B cell (primary cell): ENCODE measurements at regions of chr3 and their contacts with region 1.

Region 1: DNA sequence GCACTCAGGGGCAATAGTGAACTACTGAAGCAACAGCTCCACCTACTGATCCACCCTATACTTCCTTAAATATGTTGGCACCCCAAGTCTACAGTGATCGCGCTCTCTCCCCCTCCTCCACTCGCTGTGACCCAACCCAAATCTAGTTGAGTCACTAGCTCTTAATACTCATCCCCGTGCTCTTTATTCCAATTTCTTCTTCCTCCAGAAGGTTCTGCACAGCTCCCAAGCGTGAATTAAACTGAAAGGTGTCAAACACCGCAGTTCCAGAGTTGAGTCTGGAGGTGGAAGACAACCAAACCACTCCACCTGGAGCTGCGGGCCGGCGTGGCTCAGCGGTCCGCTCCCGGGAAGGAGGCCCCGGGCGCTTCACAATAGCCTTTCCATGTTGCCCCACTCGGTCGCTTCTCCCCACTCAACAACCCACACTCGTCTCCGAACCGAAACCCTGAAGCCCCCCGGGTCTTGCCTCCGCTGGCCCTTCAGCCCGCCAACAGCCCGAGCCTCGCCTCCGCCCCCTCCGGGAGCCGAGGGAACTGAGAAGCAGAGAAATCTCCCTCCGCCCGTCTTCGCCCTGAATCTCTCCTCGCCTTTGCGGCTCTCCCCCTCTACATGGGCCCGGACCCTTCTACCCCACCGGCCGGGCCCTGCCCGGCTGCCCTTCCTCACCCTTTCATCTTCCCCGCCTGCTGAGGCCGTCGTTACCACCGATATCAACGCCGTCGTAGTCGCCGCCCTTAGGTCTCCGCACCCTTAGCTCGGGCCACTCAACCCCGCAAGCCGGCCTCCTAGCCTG is 578 bp downstream of the NAA50 start:
- DNase-seq: peak; percentile 91
- ATAC-seq: peak; percentile 58
- H3K4me3 ChIP-seq: peak overlapping the region; percentile 75 to 94 (median 85)
- H3K4me3 Mint-ChIP-seq: peak overlapping the region; percentile 97
- H3K27ac ChIP-seq: peak overlapping the region; percentile 96 to 99
- H3K27ac Mint-ChIP-seq: peak overlapping the region; percentile 100
- H3K4me1 ChIP-seq: peaks cover 32 to 46% of the 10 kb centered on the region in 2 donors
- H3K4me1 Mint-ChIP-seq: peaks cover 67% of the 10 kb centered on the region
- H3K27me3 ChIP-seq: no peaks in the 10 kb centered on the region
- H3K27me3 Mint-ChIP-seq: no peaks in the 10 kb centered on the region
- CTCF ChIP-seq: peak; percentile 76

Region 2: GRCh38 chr3:112990672-112991602 is 754.5 kb before region 1 on chr3 and contains the start of gene GTPBP8:
- CTCF ChIA-PET with region 1: no interaction called
- POLR2A ChIA-PET with region 1: no interaction called
- intact Hi-C with region 1: loop called (anchors 2 kb)
- DNase-seq: peak; percentile 92
- ATAC-seq: peak; percentile 84
- H3K4me3 ChIP-seq: peak within 1 kb of the TSS; percentile 63 to 89 (median 76)
- H3K4me3 Mint-ChIP-seq: peak within 1 kb of the TSS; percentile 95
- H3K27ac ChIP-seq: peak within 1 kb of the TSS; percentile 82 to 98
- H3K27ac Mint-ChIP-seq: peak within 1 kb of the TSS; percentile 98
- H3K4me1 ChIP-seq: peaks cover 11 to 12% of the 10 kb centered on the region in 2 donors
- H3K4me1 Mint-ChIP-seq: peaks cover 30% of the 10 kb centered on the region
- H3K27me3 ChIP-seq: no peaks in the 10 kb centered on the region
- H3K27me3 Mint-ChIP-seq: no peaks in the 10 kb centered on the region
- CTCF ChIP-seq: no peak
- total RNA-seq, gene GTPBP8: 23.4 and 23.5 TPM in 2 replicates

Region 3: GRCh38 chr3:113531826-113532697 is 213.4 kb before region 1 on chr3 and contains the start of gene SIDT1:
- CTCF ChIA-PET with region 1: interaction called, 4 read pairs
- POLR2A ChIA-PET with region 1: no interaction called
- intact Hi-C with region 1: loop called (anchors 2 kb)
- DNase-seq: peak; percentile 89
- ATAC-seq: peak; percentile 81
- H3K4me3 ChIP-seq: peak within 1 kb of the TSS; percentile 86 to 96 (median 95)
- H3K4me3 Mint-ChIP-seq: peak within 1 kb of the TSS; percentile 93
- H3K27ac ChIP-seq: peak within 1 kb of the TSS; percentile 86 to 87
- H3K27ac Mint-ChIP-seq: peak within 1 kb of the TSS; percentile 96
- H3K4me1 ChIP-seq: peaks cover 35 to 36% of the 10 kb centered on the region in 2 donors
- H3K4me1 Mint-ChIP-seq: peaks cover 46% of the 10 kb centered on the region
- H3K27me3 ChIP-seq: no peaks in the 10 kb centered on the region
- H3K27me3 Mint-ChIP-seq: peaks cover 6% of the 10 kb centered on the region
- CTCF ChIP-seq: no peak
- total RNA-seq, gene SIDT1: 75.4 and 84.4 TPM in 2 replicates

Region 4: GRCh38 chr3:113660896-113661295 is 84.6 kb before region 1 on chr3:
- CTCF ChIA-PET with region 1: interaction called, 9 read pairs
- POLR2A ChIA-PET with region 1: interaction called, 3 read pairs
- intact Hi-C with region 1: loop called (anchors 1 kb)
- DNase-seq: peak; percentile 68
- ATAC-seq: peak; percentile 25
- H3K4me3 ChIP-seq: peak overlapping the region in 1 of 5 experiments; percentile 49
- H3K4me3 Mint-ChIP-seq: peak overlapping the region; percentile 70
- H3K27ac ChIP-seq: peak overlapping the region; percentile 81 to 93
- H3K27ac Mint-ChIP-seq: peak overlapping the region; percentile 94
- H3K4me1 ChIP-seq: peaks cover 76 to 81% of the 10 kb centered on the region in 2 donors
- H3K4me1 Mint-ChIP-seq: peaks cover 82% of the 10 kb centered on the region
- H3K27me3 ChIP-seq: no peaks in the 10 kb centered on the region
- H3K27me3 Mint-ChIP-seq: no peaks in the 10 kb centered on the region
- CTCF ChIP-seq: no peak

Region 5: GRCh38 chr3:113685956-113686754 is 59.3 kb before region 1 on chr3:
- CTCF ChIA-PET with region 1: no interaction called
- POLR2A ChIA-PET with region 1: no interaction called
- intact Hi-C with region 1: no loop called
- DNase-seq: no peak
- ATAC-seq: no peak
- H3K4me3 ChIP-seq: no peak overlapping the region
- H3K4me3 Mint-ChIP-seq: no peak overlapping the region
- H3K27ac ChIP-seq: no peak overlapping the region
- H3K27ac Mint-ChIP-seq: no peak overlapping the region
- H3K4me1 ChIP-seq: peaks cover 3 to 4% of the 10 kb centered on the region in 2 donors
- H3K4me1 Mint-ChIP-seq: peaks cover 33% of the 10 kb centered on the region
- H3K27me3 ChIP-seq: no peaks in the 10 kb centered on the region
- H3K27me3 Mint-ChIP-seq: no peaks in the 10 kb centered on the region
- CTCF ChIP-seq: no peak

Region 6: GRCh38 chr3:113832477-113833164 is 87.2 kb after region 1 on chr3:
- CTCF ChIA-PET with region 1: interaction called, 42 read pairs
- POLR2A ChIA-PET with region 1: interaction called, 24 read pairs
- intact Hi-C with region 1: loop called (anchors 2 kb)
- DNase-seq: peak; percentile 23
- ATAC-seq: no peak
- H3K4me3 ChIP-seq: peak overlapping the region in 1 of 5 experiments; percentile 3
- H3K4me3 Mint-ChIP-seq: peak overlapping the region; percentile 20
- H3K27ac ChIP-seq: peak overlapping the region; percentile 43 to 59
- H3K27ac Mint-ChIP-seq: peak overlapping the region; percentile 56
- H3K4me1 ChIP-seq: peaks cover 49 to 50% of the 10 kb centered on the region in 2 donors
- H3K4me1 Mint-ChIP-seq: peaks cover 61% of the 10 kb centered on the region
- H3K27me3 ChIP-seq: no peaks in the 10 kb centered on the region
- H3K27me3 Mint-ChIP-seq: no peaks in the 10 kb centered on the region
- CTCF ChIP-seq: no peak

Region 7: GRCh38 chr3:113947372-113948014 is 202.0 kb after region 1 on chr3 and contains the start of gene ZDHHC23:
- CTCF ChIA-PET with region 1: interaction called, 4 read pairs
- POLR2A ChIA-PET with region 1: interaction called, 3 read pairs
- intact Hi-C with region 1: loop called (anchors 2 kb)
- DNase-seq: peak; percentile 88
- ATAC-seq: peak; percentile 84
- H3K4me3 ChIP-seq: peak within 1 kb of the TSS; percentile 47 to 89 (median 84)
- H3K4me3 Mint-ChIP-seq: peak within 1 kb of the TSS; percentile 87
- H3K27ac ChIP-seq: peak within 1 kb of the TSS; percentile 48 to 74
- H3K27ac Mint-ChIP-seq: peak within 1 kb of the TSS; percentile 89
- H3K4me1 ChIP-seq: peaks cover 12 to 14% of the 10 kb centered on the region in 2 donors
- H3K4me1 Mint-ChIP-seq: peaks cover 18% of the 10 kb centered on the region
- H3K27me3 ChIP-seq: no peaks in the 10 kb centered on the region
- H3K27me3 Mint-ChIP-seq: no peaks in the 10 kb centered on the region
- CTCF ChIP-seq: no peak
- total RNA-seq, gene ZDHHC23: 72.6 and 75.1 TPM in 2 replicates